ENCODE measurements at regions of chr19 and their contacts with region 1.

Region 1: GRCh38 chr19:15629003-15629880 is 11.5 kb upstream of the CYP4F3 start:
- DNase-seq: peak; percentile 75 to 83
- ATAC-seq: peak; percentile 81 to 94 (median 89)
- H3K4me3 ChIP-seq: no peak overlapping the region
- H3K27ac ChIP-seq: no peak overlapping the region
- H3K4me1 ChIP-seq: peaks cover 0 to 14% (median 0%) of the 10 kb centered on the region in 9 donors
- H3K27me3 ChIP-seq: peaks cover 0 to 65% (median 17%) of the 10 kb centered on the region in 7 donors
- CTCF ChIP-seq: peak; percentile 89 to 99 (median 97)

Region 2: DNA sequence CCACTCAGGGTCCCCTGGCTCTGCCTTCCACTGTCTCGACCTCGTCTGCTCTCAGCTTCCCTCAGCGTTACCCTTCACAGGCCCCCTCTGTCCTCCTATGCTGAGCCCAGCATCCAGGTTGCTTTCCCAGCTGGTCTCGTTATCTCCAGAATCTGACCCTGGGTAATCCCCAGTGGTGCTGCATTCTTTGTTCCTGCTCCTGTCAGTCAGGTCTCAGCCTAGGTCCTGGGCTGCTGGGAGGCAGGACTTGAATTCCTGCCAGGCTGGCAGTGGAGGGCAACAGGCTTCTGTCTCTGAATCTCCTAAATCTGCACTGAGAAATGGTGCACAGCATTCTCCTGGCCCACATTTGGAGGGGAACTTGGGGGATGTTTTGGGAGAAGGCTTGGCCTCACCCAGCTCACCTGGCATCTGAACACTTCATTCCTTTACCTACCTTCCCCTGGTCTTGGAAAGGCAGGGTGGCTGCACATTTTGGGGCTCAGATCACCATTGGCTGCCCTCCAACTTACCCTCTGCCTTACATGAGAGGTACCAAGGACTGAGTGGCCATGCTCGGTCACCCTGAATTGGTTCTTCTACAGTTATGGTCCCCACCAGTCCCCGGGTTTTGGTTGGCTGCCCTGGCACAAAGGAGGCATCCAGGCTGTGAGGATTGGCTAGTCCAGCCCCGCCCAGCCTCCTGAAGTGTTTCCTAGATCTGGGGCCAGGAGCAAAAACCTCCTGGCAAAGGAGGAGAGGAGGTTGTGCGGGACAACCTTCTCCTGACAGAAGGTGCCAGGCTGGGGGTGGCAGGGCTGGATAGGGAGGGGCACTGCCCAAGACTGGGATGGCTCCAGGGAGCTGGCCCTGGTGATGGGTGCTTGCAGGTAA is 14.5 kb before region 1 on chr19 and contains the start of gene CYP4F8:
- intact Hi-C with region 1: no loop called
- DNase-seq: no peak
- ATAC-seq: no peak
- H3K4me3 ChIP-seq: no peak within 1 kb of the TSS
- H3K27ac ChIP-seq: no peak within 1 kb of the TSS
- H3K4me1 ChIP-seq: no peaks in the 10 kb centered on the region
- H3K27me3 ChIP-seq: peaks cover 0 to 52% (median 15%) of the 10 kb centered on the region in 7 donors
- CTCF ChIP-seq: no peak
- total RNA-seq, gene CYP4F8: not detected

Region 3: GRCh38 chr19:15810335-15810734 is 181.1 kb after region 1 on chr19:
- intact Hi-C with region 1: loop called in 9 of 10 experiments (anchors 2 to 10 kb)
- DNase-seq: peak in 1 of 2 donors; percentile 7
- ATAC-seq: peak in 1 of 8 donors; percentile 42
- H3K4me3 ChIP-seq: no peak overlapping the region
- H3K27ac ChIP-seq: no peak overlapping the region
- H3K4me1 ChIP-seq: peaks cover 0 to 6% (median 0%) of the 10 kb centered on the region in 9 donors
- H3K27me3 ChIP-seq: peaks cover 0 to 42% (median 25%) of the 10 kb centered on the region in 7 donors
- CTCF ChIP-seq: peak in 8 of 9 donors; percentile 29 to 64 (median 50)

Region 4: DNA sequence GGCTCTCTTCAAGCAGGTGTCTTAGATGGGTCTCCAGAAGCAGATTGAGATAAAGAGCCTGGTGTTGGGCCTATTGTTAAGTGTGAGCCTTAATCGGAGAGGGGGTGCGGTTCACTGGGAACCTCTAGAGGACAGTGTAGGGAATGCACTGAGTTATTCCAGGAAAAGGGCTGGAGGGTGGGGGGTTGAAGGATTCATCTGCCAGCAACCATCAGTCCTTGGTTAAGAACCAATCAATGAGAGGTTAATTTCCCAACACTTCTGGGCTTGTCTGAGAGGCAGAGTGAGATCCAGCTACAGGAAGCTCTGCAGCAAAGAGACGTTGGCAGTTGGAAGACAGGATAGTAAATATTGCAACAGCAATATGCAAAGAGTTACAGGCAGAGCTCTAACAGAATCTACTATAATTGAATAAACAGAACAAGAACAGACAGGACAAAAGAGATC is 239.9 kb after region 1 on chr19:
- intact Hi-C with region 1: loop called in 9 of 10 experiments (anchors 1 to 10 kb)
- DNase-seq: peak in 1 of 2 donors; percentile 15
- ATAC-seq: peak in 4 of 8 donors; percentile 53 to 74 (median 61)
- H3K4me3 ChIP-seq: no peak overlapping the region
- H3K27ac ChIP-seq: no peak overlapping the region
- H3K4me1 ChIP-seq: peaks cover 0 to 3% (median 0%) of the 10 kb centered on the region in 9 donors
- H3K27me3 ChIP-seq: peaks cover 0 to 44% (median 25%) of the 10 kb centered on the region in 7 donors
- CTCF ChIP-seq: peak; percentile 33 to 65 (median 55)

Region 5: GRCh38 chr19:16041299-16041990 is 412.2 kb after region 1 on chr19:
- intact Hi-C with region 1: loop called in 1 of 10 experiments (anchors 10 kb)
- DNase-seq: peak; percentile 79 to 84
- ATAC-seq: peak; percentile 87 to 96 (median 94)
- H3K4me3 ChIP-seq: peak overlapping the region in 6 of 10 donors; percentile 7 to 32 (median 24)
- H3K27ac ChIP-seq: no peak overlapping the region
- H3K4me1 ChIP-seq: peaks cover 0 to 17% (median 10%) of the 10 kb centered on the region in 9 donors
- H3K27me3 ChIP-seq: peaks cover 0 to 9% (median 0%) of the 10 kb centered on the region in 7 donors
- CTCF ChIP-seq: peak in 8 of 9 donors; percentile 95 to 99 (median 96)

Region 6: GRCh38 chr19:16185123-16185767 is 556.0 kb after region 1 on chr19 and contains the start of gene FAM32A:
- intact Hi-C with region 1: loop called (anchors 1 to 10 kb)
- DNase-seq: peak; percentile 99
- ATAC-seq: peak; percentile 96 to 99 (median 98)
- H3K4me3 ChIP-seq: peak within 1 kb of the TSS; percentile 74 to 96 (median 90)
- H3K27ac ChIP-seq: peak within 1 kb of the TSS; percentile 21 to 93 (median 87)
- H3K4me1 ChIP-seq: peaks cover 0 to 40% (median 21%) of the 10 kb centered on the region in 9 donors
- H3K27me3 ChIP-seq: peaks cover 0 to 20% (median 0%) of the 10 kb centered on the region in 7 donors
- CTCF ChIP-seq: peak in 7 of 9 donors; percentile 10 to 50 (median 34)
- total RNA-seq, gene FAM32A: 27.0 to 44.5 (median 32.5) TPM